AG04450 (cell line): ENCODE measurements at regions of chr3 and their contacts with region 1.

Region 1: GRCh38 chr3:45929042-45929679 is 14.1 kb upstream of the CXCR6 start:
- DNase-seq: no peak
- H3K4me3 ChIP-seq: no peak overlapping the region
- H3K27ac ChIP-seq: no peak overlapping the region
- H3K27me3 ChIP-seq: no peaks in the 10 kb centered on the region
- CTCF ChIP-seq: peak; percentile 92

Region 2: DNA sequence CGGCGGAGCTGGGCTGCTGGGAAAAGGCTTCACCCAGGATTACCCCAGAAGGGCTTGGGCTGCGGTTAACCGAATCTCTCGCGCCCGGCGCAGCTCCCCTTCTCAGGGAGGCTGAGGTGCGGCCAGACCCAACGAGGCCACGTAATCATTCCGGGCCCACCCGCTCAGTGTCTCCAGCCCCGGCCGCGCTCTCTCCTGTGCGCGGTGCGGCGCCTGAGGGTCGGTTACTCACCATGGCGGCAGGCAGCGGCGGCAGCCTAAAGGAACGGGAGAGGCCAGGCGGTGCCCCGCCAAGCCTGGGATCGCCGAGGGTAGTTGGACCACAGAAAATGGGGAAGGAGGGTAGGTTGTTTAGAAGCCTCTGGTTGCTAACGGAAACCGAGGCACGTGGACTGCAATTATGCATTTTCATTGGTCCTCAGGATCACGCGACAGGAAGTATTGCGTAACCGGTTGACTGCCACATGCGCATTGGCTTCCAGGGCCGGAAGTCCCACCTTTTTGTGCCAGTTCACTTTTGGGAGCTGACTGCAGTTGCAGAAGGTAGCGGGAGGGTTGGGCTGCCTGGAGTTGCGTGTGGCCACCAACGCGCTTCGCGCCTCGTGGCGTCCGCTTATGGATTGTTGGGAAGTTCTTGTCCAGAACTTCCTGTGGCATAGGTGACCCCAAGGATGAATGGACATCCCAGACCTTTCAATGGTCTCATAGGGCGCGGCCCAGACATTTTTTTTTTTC is 87.2 kb before region 1 on chr3 and contains the start of gene LZTFL1:
- CTCF ChIA-PET with region 1: interaction called, 10 read pairs
- POLR2A ChIA-PET with region 1: no interaction called
- DNase-seq: peak; percentile 92
- H3K4me3 ChIP-seq: peak within 1 kb of the TSS; percentile 93
- H3K27ac ChIP-seq: peak within 1 kb of the TSS; percentile 58
- H3K27me3 ChIP-seq: peaks cover 7% of the 10 kb centered on the region
- CTCF ChIP-seq: no peak
- polyA plus RNA-seq, gene LZTFL1: 22.8 and 32.4 TPM in 2 replicates